Endothelial cell of umbilical vein (primary cell): ENCODE measurements at regions of chr22 and their contacts with region 1.

Region 1: GRCh38 chr22:40183029-40183581 is 5.4 kb downstream of the TNRC6B start:
- DNase-seq: peak; percentile 92
- H3K4me3 ChIP-seq: peak overlapping the region in 1 of 3 experiments; percentile 41
- H3K27ac ChIP-seq: peak overlapping the region; percentile 89
- H3K4me1 ChIP-seq: peaks cover 42% of the 10 kb centered on the region
- H3K27me3 ChIP-seq: no peaks in the 10 kb centered on the region
- CTCF ChIP-seq: no peak
- POLR2A ChIP-seq: no peak

Region 2: GRCh38 chr22:39943337-39943736 is 239.8 kb before region 1 on chr22:
- CTCF ChIA-PET with region 1: no interaction called
- POLR2A ChIA-PET with region 1: no interaction called
- dilution Hi-C with region 1: no loop called
- intact Hi-C with region 1: no loop called
- DNase-seq: no peak
- H3K4me3 ChIP-seq: no peak overlapping the region
- H3K27ac ChIP-seq: no peak overlapping the region
- H3K4me1 ChIP-seq: no peaks in the 10 kb centered on the region
- H3K27me3 ChIP-seq: peaks cover 4 to 5% of the 10 kb centered on the region in 2 experiments
- CTCF ChIP-seq: peak in 1 of 2 donors; percentile 3
- POLR2A ChIP-seq: no peak

Region 3: DNA sequence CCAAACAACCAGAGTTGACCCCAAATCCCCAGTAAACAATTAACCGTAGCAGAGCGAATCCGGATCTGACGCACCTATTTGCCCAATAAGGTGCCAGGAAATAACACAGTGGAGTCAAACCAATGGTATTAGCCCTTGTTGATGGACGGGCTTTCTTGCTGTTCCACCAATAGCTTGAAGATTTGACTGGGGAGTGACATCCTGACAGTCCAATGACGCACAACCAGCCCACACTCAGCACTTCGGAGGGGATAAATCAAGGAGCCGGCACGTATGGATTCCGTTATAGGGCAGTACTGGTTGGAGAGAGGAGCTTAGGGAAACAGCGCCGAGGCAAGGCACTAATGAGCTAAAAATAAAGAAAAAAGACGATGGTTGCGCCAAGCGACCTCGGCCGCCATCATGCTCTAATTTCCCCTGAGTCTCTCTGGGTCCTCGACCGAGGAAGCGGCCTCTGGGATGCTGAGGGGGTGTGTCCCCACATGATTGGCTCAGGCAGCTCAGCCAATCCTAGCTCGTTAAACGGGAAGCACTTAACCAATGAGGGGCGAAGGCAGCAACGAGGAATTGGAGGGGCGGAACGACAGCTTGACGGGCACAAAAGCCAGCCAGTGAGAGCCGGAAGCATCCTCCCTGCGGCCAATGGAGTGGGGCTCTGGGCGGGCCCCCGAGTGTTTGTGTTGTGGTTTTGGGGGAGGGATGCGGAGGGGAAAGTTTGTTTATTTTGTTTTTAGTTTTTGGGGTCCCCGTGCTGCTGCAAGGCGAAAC is 138.8 kb before region 1 on chr22:
- CTCF ChIA-PET with region 1: interaction called, 8 read pairs
- POLR2A ChIA-PET with region 1: interaction called, 5 read pairs
- dilution Hi-C with region 1: no loop called
- intact Hi-C with region 1: loop called (anchors 1 kb)
- DNase-seq: peak; percentile 99
- H3K4me3 ChIP-seq: peak overlapping the region; percentile 48 to 95 (median 68)
- H3K27ac ChIP-seq: peak overlapping the region; percentile 87
- H3K4me1 ChIP-seq: peaks cover 19% of the 10 kb centered on the region
- H3K27me3 ChIP-seq: peaks cover 0 to 16% of the 10 kb centered on the region in 2 experiments
- CTCF ChIP-seq: no peak
- POLR2A ChIP-seq: no peak

Region 4: GRCh38 chr22:40193429-40194421 is 10.6 kb after region 1 on chr22:
- CTCF ChIA-PET with region 1: interaction called, 12 read pairs
- POLR2A ChIA-PET with region 1: no interaction called
- dilution Hi-C with region 1: no loop called
- intact Hi-C with region 1: no loop called
- DNase-seq: peak; percentile 41
- H3K4me3 ChIP-seq: no peak overlapping the region
- H3K27ac ChIP-seq: no peak overlapping the region
- H3K4me1 ChIP-seq: peaks cover 10% of the 10 kb centered on the region
- H3K27me3 ChIP-seq: no peaks in the 10 kb centered on the region
- CTCF ChIP-seq: peak; percentile 16 to 25
- POLR2A ChIP-seq: no peak

Region 5: GRCh38 chr22:40238425-40239344 is 55.6 kb after region 1 on chr22:
- CTCF ChIA-PET with region 1: no interaction called
- POLR2A ChIA-PET with region 1: no interaction called
- dilution Hi-C with region 1: no loop called
- intact Hi-C with region 1: loop called (anchors 2 kb)
- DNase-seq: peak; percentile 74
- H3K4me3 ChIP-seq: no peak overlapping the region
- H3K27ac ChIP-seq: peak overlapping the region; percentile 44
- H3K4me1 ChIP-seq: peaks cover 27% of the 10 kb centered on the region
- H3K27me3 ChIP-seq: no peaks in the 10 kb centered on the region
- CTCF ChIP-seq: no peak
- POLR2A ChIP-seq: no peak